H1 (cell line): ENCODE measurements at regions of chr20 and their contacts with region 1.

Region 1: DNA sequence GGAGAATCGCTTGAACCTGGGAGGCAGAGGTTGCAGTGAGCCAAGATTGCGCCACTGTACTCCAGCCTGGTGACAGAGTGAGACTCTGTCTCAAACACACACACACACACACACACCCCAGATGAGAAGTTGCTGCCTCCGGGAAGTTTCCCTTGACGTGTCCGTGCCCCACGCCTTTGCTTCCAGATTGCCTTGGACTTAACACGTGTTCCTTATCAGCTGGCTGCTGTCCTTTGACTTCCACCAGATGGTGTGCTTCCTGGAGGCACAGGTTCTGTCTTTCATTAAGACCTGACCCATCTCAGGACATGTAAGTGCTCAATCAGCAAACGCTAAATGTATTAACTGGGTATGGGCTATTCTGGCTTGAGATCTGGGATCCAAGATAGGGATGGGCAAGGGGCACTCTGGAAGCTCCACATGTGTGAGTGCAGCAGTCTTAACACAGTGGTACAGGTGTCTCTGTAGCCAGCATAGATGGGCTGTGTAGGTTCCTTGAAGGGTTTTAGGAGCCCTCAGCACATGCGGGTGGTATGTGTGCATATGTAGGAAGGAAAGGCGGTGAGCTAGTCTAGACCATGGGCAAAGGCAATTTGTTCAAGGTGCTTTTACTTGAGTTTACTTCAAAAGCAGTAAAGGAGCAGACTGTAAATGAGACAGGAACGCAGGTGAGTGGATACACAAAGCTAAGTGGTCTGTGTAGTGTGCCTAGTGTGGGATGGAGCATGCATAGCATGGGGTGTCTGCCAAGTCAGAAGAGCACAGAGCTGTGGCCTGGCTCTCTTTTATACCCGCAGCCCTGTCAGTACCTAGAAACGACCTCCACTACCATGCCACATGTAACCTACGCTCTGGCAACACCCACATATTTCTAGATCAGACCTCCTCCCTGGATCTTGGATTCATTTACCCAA is 11.6 kb downstream of the PIGT start:
- DNase-seq: no peak
- H3K4me3 ChIP-seq: no peak overlapping the region
- H3K27ac ChIP-seq: no peak overlapping the region
- H3K4me1 ChIP-seq: no peaks in the 10 kb centered on the region
- H3K27me3 ChIP-seq: no peaks in the 10 kb centered on the region
- CTCF ChIP-seq: no peak
- EP300 ChIP-seq: no peak
- POLR2A ChIP-seq: no peak
- RAD21 ChIP-seq: no peak

Region 2: GRCh38 chr20:45415774-45416637 is 11.5 kb before region 1 on chr20 and contains the start of gene PIGT:
- CTCF ChIA-PET with region 1: interaction called, 11 read pairs
- POLR2A ChIA-PET with region 1: interaction called, 6 read pairs
- DNase-seq: peak; percentile 54 to 84
- H3K4me3 ChIP-seq: peak within 1 kb of the TSS; percentile 74 to 89 (median 82)
- H3K27ac ChIP-seq: peak within 1 kb of the TSS; percentile 49
- H3K4me1 ChIP-seq: peaks cover 0 to 5% (median 2%) of the 10 kb centered on the region in 4 experiments; a peak in 3 of 7 replicates
- H3K27me3 ChIP-seq: no peaks in the 10 kb centered on the region
- CTCF ChIP-seq: no peak
- EP300 ChIP-seq: no peak
- POLR2A ChIP-seq: peak; percentile 80 to 87
- RAD21 ChIP-seq: peak; percentile 2 to 13; a peak in 1 of 4 replicates
- total RNA-seq, gene PIGT: 64.3 and 66.0 TPM in 2 replicates

Region 3: DNA sequence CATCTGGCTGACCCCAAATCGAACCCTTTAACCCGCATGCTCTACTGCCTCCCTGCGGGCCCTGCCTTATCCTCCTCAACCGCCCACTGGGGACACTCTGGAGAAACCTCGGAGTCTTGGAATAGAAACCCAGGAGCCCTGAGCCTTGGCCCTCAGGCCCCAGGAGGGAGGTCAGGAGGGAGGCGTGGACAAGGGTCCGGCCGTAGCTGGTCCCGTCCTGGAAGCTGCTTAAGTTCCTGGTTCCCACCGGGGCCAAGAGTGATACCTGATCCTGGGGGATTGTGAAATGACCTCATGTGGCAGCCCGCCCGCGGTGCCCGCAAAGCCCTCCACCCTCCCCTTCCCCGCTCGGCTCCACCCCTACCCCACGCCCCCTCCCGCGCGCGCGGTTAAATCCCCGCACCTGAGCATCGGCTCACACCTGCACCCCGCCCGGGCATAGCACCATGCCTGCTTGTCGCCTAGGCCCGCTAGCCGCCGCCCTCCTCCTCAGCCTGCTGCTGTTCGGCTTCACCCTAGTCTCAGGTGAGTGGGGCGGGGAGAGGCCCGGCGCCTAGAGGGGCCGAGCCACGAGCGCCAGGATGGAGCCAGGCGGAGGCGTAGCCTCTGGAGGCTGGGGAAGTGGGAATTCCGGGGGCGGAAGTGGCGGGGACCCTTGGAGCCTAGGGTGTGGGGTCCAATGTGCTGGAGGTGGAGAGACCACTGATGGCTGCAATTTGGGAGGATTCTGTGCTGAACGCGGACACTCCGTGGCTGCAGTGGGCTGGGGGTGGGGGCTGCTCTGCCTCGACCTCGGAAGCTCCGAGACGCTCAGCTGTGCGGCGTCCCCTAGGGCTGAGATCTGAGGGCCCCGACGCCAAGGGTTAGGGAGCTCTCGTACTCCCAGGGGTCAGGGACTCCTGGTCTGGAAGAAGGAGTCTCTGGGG is 42.1 kb after region 1 on chr20 and contains the start of gene WFDC2:
- CTCF ChIA-PET with region 1: no interaction called
- POLR2A ChIA-PET with region 1: no interaction called
- DNase-seq: peak in 1 of 2 experiments; percentile 78
- H3K4me3 ChIP-seq: peak within 1 kb of the TSS; percentile 63 to 77 (median 70)
- H3K27ac ChIP-seq: peak within 1 kb of the TSS; percentile 36; the same call in 1 of the 2 replicates
- H3K4me1 ChIP-seq: peaks cover 2 to 20% (median 7%) of the 10 kb centered on the region in 4 experiments
- H3K27me3 ChIP-seq: peaks cover 0 to 4% (median 1%) of the 10 kb centered on the region in 4 experiments; a peak in 3 of 7 replicates
- CTCF ChIP-seq: peak; percentile 22 to 67 (median 44)
- EP300 ChIP-seq: no peak
- POLR2A ChIP-seq: no peak; a peak in 1 of 3 replicates
- RAD21 ChIP-seq: peak; percentile 34 to 42; a peak in 3 of 4 replicates
- total RNA-seq, gene WFDC2: 77.9 and 86.0 TPM in 2 replicates